Heart left ventricle (tissue), 16 donors: ENCODE measurements at regions of chr12 and their contacts with region 1.

Region 1: GRCh38 chr12:55817346-55818139 is at the starts of genes ORMDL2 and SARNP:
- DNase-seq: peak; percentile 96 to 98 (median 98)
- ATAC-seq: peak; percentile 98 to 99 (median 99)
- H3K4me3 ChIP-seq: peak within 1 kb of the TSS; percentile 59 to 95 (median 74)
- H3K27ac ChIP-seq: peak within 1 kb of the TSS; percentile 62 to 92 (median 84)
- H3K4me1 ChIP-seq: peaks cover 4 to 43% (median 30%) of the 10 kb centered on the region in 12 donors
- H3K27me3 ChIP-seq: no peaks in the 10 kb centered on the region
- CTCF ChIP-seq: no peak
- POLR2A ChIP-seq: peak in 1 of 2 donors; percentile 47
- total RNA-seq, gene ORMDL2: 9.6 to 42.3 (median 22.2) TPM
- total RNA-seq, gene SARNP: 47.2 to 69.3 (median 54.0) TPM

Region 2: GRCh38 chr12:55829967-55830600 is 12.5 kb after region 1 on chr12:
- intact Hi-C with region 1: loop called in 2 of 10 experiments (anchors 1 kb)
- DNase-seq: peak; percentile 45 to 70 (median 55)
- ATAC-seq: peak; percentile 19 to 47 (median 37)
- H3K4me3 ChIP-seq: peak overlapping the region; percentile 72 to 97 (median 88)
- H3K27ac ChIP-seq: peak overlapping the region; percentile 87 to 95 (median 92)
- H3K4me1 ChIP-seq: peaks cover 0 to 53% (median 34%) of the 10 kb centered on the region in 12 donors
- H3K27me3 ChIP-seq: no peaks in the 10 kb centered on the region
- CTCF ChIP-seq: no peak
- POLR2A ChIP-seq: no peak

Region 3: GRCh38 chr12:55899082-55899481 is 81.5 kb after region 1 on chr12:
- intact Hi-C with region 1: no loop called
- DNase-seq: no peak
- ATAC-seq: no peak
- H3K4me3 ChIP-seq: no peak overlapping the region
- H3K27ac ChIP-seq: no peak overlapping the region
- H3K4me1 ChIP-seq: no peaks in the 10 kb centered on the region
- H3K27me3 ChIP-seq: no peaks in the 10 kb centered on the region
- CTCF ChIP-seq: no peak
- POLR2A ChIP-seq: no peak

Region 4: DNA sequence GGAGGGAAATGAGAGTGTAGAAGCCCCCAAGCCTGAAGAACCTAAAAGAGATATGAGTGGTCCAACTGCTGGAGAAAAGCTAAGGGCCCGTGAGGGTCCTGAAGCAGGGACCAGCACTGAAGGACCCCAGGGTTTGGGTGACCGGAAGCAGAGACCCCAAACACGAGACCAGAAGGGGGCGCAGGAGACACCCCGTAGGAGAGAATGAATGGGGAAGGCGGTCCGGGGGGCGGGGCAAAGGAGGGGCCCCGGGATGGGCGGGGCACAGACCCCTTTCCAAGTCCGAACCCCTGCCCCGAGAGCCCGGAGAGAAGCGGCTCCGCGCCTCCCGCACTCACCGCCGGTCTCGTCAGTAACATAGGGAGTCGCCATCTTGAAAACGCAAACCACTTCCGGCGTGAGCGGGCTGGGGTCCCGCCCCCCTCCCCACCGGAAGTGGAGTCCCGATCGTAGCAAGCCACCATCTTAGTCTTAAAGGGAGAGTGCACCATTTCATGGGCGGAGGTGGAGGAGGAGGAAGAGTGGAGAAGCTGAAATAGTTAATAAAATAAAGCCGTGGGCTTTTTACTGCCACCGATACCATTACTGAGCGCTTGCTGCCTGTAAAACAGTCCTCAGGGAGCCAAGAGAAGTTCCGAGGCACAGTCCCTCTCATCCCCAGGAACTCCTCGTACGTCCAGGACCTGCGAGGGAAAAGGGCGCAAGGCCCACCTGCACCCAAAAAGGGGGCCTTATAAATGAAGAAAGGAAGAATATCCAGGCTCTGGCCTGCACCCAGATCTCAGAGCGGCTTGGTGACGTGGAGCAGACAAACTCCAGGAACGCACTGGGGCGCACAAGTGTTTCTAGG is 109.4 kb after region 1 on chr12:
- intact Hi-C with region 1: loop called in 3 of 10 experiments (anchors 2 to 5 kb)
- DNase-seq: peak; percentile 87 to 91 (median 89)
- ATAC-seq: peak; percentile 87 to 91 (median 89)
- H3K4me3 ChIP-seq: peak overlapping the region; percentile 53 to 95 (median 82)
- H3K27ac ChIP-seq: peak overlapping the region; percentile 81 to 98 (median 97)
- H3K4me1 ChIP-seq: peaks cover 0 to 53% (median 34%) of the 10 kb centered on the region in 12 donors
- H3K27me3 ChIP-seq: no peaks in the 10 kb centered on the region
- CTCF ChIP-seq: peak; percentile 38 to 96 (median 77)
- POLR2A ChIP-seq: peak in 1 of 2 donors; percentile 51

Region 5: GRCh38 chr12:55940065-55940732 is 122.7 kb after region 1 on chr12:
- intact Hi-C with region 1: loop called in 1 of 10 experiments (anchors 5 kb)
- DNase-seq: peak; percentile 83 to 87 (median 87)
- ATAC-seq: peak; percentile 85 to 96 (median 95)
- H3K4me3 ChIP-seq: peak overlapping the region in 8 of 12 donors; percentile 15 to 42 (median 24)
- H3K27ac ChIP-seq: peak overlapping the region in 2 of 12 donors; percentile 7 to 58
- H3K4me1 ChIP-seq: peaks cover 0 to 13% (median 7%) of the 10 kb centered on the region in 12 donors
- H3K27me3 ChIP-seq: no peaks in the 10 kb centered on the region
- CTCF ChIP-seq: peak; percentile 87 to 94 (median 91)
- POLR2A ChIP-seq: no peak

Region 6: GRCh38 chr12:55973598-55974307 is 156.2 kb after region 1 on chr12 and contains the start of gene RAB5B:
- intact Hi-C with region 1: loop called in 1 of 10 experiments (anchors 5 kb)
- DNase-seq: peak; percentile 98 to 100 (median 100)
- ATAC-seq: peak; percentile 94 to 96 (median 95)
- H3K4me3 ChIP-seq: peak within 1 kb of the TSS; percentile 84 to 100 (median 92)
- H3K27ac ChIP-seq: peak within 1 kb of the TSS; percentile 84 to 99 (median 96)
- H3K4me1 ChIP-seq: peaks cover 0 to 55% (median 30%) of the 10 kb centered on the region in 12 donors
- H3K27me3 ChIP-seq: no peaks in the 10 kb centered on the region
- CTCF ChIP-seq: peak in 8 of 12 donors; percentile 9 to 51 (median 34)
- POLR2A ChIP-seq: peak; percentile 96 to 99
- total RNA-seq, gene RAB5B: 97.5 to 135 (median 119) TPM

Region 7: DNA sequence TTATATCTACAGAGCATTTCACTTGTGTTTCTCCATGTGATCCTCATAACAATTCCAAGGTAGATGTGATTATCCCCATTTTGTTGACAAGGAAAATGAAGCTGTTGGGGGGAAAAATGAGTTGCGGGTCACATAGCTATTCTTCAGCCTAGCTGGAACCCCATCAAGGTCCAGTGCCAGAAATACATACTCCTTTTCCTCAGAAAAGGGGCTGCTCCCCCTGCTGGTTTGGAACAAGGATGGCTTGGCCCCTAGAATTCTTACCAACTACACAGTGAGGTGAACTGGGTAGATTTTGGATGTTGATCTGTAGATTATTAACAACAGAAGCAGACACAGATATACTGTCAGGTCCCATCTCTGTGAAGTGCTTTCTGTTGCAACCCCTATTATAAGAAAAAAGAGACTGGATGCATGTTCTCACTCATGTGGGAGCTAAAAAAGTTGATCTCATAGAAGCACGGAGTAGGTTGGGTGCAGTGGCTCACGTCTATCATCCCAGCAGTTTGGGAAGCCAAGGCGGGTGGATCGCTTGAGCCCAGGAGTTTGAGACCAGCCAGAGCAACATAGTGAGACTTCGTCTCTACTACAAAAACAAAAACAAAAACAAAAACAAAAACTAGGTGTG is 212.2 kb after region 1 on chr12:
- intact Hi-C with region 1: loop called in 1 of 10 experiments (anchors 10 kb)
- DNase-seq: peak in 1 of 5 donors; percentile 36
- ATAC-seq: peak in 1 of 4 donors; percentile 58
- H3K4me3 ChIP-seq: no peak overlapping the region
- H3K27ac ChIP-seq: no peak overlapping the region
- H3K4me1 ChIP-seq: peaks cover 0 to 2% (median 0%) of the 10 kb centered on the region in 12 donors
- H3K27me3 ChIP-seq: no peaks in the 10 kb centered on the region
- CTCF ChIP-seq: peak; percentile 34 to 66 (median 53)
- POLR2A ChIP-seq: no peak

Region 8: DNA sequence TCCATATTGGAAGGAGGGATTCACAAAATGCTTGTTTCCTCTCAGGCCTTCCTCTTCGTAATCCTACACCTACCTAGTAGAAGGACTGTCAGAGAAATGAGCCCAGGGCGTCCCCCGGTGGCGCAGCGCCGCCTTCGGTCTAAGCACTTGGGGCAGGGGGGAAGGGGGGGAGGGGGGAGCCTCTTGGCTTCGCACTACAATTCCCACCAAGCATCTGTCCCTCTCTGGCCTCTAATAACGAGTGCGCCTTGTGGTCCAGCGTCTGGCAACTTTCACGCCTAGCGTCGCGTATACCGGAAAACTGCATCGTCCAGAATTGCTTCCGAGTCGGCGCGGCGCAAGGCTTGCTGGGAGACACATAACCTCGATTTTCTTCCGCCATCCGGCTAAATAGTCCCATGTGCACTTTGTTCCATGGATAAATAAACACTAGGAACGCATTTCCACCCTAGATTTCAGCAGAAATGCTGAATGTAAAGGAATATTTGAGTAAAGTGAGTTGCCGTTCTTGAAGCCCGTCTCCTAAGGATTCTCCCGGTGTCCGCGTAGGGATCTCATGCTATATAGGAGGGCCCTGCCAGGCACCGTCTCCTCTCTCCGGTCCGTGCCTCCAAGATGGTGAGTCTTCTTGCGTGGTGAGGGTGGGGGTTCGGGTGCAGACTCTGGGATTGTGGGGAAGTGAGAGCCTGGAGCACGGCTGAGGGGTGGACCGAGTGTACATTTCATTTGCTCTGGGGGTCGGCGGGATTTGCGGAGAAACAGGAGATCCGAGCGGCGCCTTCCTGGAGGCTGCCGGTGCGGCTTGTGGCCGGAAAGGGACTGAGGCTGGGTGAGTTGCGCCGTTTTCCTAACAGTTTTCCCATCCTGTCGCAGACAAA is 224.2 kb after region 1 on chr12 and contains the start of gene RPS26:
- intact Hi-C with region 1: loop called in 3 of 10 experiments (anchors 5 to 10 kb)
- DNase-seq: peak; percentile 95 to 99 (median 97)
- ATAC-seq: peak; percentile 96 to 98 (median 97)
- H3K4me3 ChIP-seq: peak within 1 kb of the TSS; percentile 66 to 97 (median 83)
- H3K27ac ChIP-seq: peak within 1 kb of the TSS; percentile 89 to 99 (median 96)
- H3K4me1 ChIP-seq: peaks cover 3 to 23% (median 17%) of the 10 kb centered on the region in 12 donors
- H3K27me3 ChIP-seq: no peaks in the 10 kb centered on the region
- CTCF ChIP-seq: peak; percentile 22 to 65 (median 50)
- POLR2A ChIP-seq: peak in 1 of 2 donors; percentile 52
- total RNA-seq, gene RPS26: 11.7 to 616 (median 23.2) TPM

Region 9: DNA sequence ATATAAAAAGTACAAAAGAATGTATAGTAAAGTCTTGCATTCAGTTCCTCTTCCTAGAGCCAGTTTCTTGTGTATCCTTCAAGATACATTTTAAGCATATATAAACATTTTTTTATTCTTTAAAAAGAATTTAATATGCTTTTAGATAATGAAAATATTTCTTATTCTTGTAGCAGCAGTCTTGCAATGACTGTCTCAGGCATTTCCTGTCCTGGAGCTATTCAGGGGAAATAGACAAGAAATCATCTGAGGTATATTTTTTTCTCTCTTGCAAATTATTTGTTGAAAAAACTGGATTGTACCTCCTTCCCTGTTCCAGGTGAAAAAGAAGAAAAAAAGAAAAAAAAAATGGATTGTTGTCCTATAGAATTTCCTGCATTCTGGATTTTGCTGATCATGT is 245.5 kb after region 1 on chr12:
- intact Hi-C with region 1: no loop called
- DNase-seq: no peak
- ATAC-seq: no peak
- H3K4me3 ChIP-seq: no peak overlapping the region
- H3K27ac ChIP-seq: no peak overlapping the region
- H3K4me1 ChIP-seq: no peaks in the 10 kb centered on the region
- H3K27me3 ChIP-seq: no peaks in the 10 kb centered on the region
- CTCF ChIP-seq: no peak
- POLR2A ChIP-seq: no peak

Region 10: DNA sequence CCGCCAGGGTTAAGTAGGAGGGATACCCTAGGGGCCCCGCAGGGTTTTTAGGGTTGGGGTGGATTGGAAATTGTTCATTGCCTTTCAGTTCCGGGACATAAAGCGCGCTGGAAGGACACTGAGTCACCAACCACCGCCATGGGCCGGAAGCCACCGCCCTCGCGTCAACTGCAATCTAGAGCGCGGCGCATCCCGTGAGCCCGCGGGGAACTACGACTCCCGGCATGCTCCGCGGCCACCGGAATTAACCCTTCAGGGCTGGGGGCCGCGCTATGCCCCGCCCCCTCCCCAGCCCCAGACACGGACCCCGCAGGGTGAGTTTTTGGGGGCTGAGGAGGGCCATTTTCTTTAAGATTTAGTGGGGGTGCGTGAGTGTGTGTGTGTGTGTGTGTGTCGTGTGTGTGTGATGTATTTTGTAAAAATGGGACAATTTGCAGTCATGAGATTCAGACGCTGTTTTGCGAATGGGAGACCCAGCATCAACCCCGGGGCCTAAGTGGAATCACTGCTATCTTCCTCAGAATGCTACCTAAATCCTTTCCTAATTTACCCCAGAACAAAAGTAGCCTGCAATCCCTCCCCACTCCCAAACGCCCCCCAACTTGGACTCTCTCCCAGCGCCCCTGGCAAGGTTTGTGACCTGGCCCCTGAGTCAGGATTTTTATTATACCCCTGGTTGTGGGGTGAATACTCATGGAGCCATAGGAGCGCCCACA is 334.9 kb after region 1 on chr12 and contains the start of gene MYL6B:
- intact Hi-C with region 1: no loop called
- DNase-seq: peak; percentile 94 to 97 (median 96)
- ATAC-seq: peak; percentile 95 to 98 (median 97)
- H3K4me3 ChIP-seq: peak within 1 kb of the TSS; percentile 22 to 92 (median 72)
- H3K27ac ChIP-seq: peak within 1 kb of the TSS; percentile 80 to 98 (median 94)
- H3K4me1 ChIP-seq: peaks cover 4 to 35% (median 24%) of the 10 kb centered on the region in 12 donors
- H3K27me3 ChIP-seq: no peaks in the 10 kb centered on the region
- CTCF ChIP-seq: no peak
- POLR2A ChIP-seq: peak in 1 of 2 donors; percentile 62
- total RNA-seq, gene MYL6B: 30.1 to 55.2 (median 41.1) TPM